Mammary epithelial cell (primary cell): ENCODE measurements at regions of chr14 and their contacts with region 1.

Region 1: GRCh38 chr14:65255536-65256461 is 153.5 kb upstream of the MAX start:
- DNase-seq: peak; percentile 84
- H3K4me3 ChIP-seq: no peak overlapping the region
- H3K27ac ChIP-seq: peak overlapping the region; percentile 88
- H3K4me1 ChIP-seq: peaks cover 46% of the 10 kb centered on the region
- H3K27me3 ChIP-seq: no peaks in the 10 kb centered on the region
- CTCF ChIP-seq: peak in 1 of 2 donors; percentile 2

Region 2: GRCh38 chr14:65290830-65291229 is 35.0 kb after region 1 on chr14:
- CTCF ChIA-PET with region 1: no interaction called
- dilution Hi-C with region 1: no loop called
- in situ Hi-C with region 1: no loop called
- intact Hi-C with region 1: loop called (anchors 2 kb)
- DNase-seq: peak; percentile 97
- H3K4me3 ChIP-seq: no peak overlapping the region
- H3K27ac ChIP-seq: peak overlapping the region; percentile 53
- H3K4me1 ChIP-seq: peaks cover 11% of the 10 kb centered on the region
- H3K27me3 ChIP-seq: no peaks in the 10 kb centered on the region
- CTCF ChIP-seq: no peak

Region 3: GRCh38 chr14:65664436-65664835 is 408.6 kb after region 1 on chr14:
- CTCF ChIA-PET with region 1: no interaction called
- dilution Hi-C with region 1: no loop called
- in situ Hi-C with region 1: no loop called
- intact Hi-C with region 1: no loop called
- DNase-seq: no peak
- H3K4me3 ChIP-seq: no peak overlapping the region
- H3K27ac ChIP-seq: no peak overlapping the region
- H3K4me1 ChIP-seq: no peaks in the 10 kb centered on the region
- H3K27me3 ChIP-seq: no peaks in the 10 kb centered on the region
- CTCF ChIP-seq: no peak